Ovary (tissue), 10 donors: ENCODE measurements at regions of chr1 and their contacts with region 1.

Region 1: GRCh38 chr1:31548907-31549808 is 27.2 kb upstream of the TINAGL1 start:
- DNase-seq: peak; percentile 67 to 88 (median 84)
- H3K4me3 ChIP-seq: no peak overlapping the region
- H3K27ac ChIP-seq: no peak overlapping the region
- H3K4me1 ChIP-seq: peaks cover 5% of the 10 kb centered on the region
- H3K27me3 ChIP-seq: no peaks in the 10 kb centered on the region
- CTCF ChIP-seq: peak; percentile 83 to 88 (median 84)
- EP300 ChIP-seq: no peak
- POLR2A ChIP-seq: no peak

Region 2: DNA sequence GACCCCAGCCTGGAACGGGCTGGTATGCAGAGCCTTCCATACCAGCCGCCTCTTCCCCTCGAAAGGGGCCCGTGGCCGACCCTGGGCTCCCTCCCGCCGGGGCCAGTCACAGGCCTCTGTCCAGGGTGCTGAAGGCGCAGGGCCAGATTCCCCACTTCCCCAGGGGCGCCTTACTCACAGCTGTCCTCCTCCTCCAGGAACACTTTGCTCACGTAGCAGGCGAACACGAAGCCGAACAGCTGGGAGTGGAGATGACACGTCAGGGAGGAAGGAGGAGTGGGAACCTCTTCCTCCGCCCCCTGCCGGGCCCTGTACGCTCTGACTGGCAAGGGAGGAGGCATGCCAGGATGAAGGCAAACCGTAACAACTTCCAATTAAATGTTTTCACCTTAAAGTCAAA is 366.8 kb before region 1 on chr1:
- intact Hi-C with region 1: loop called in 1 of 4 experiments (anchors 10 kb)
- DNase-seq: peak; percentile 60 to 93 (median 77)
- H3K4me3 ChIP-seq: no peak overlapping the region
- H3K27ac ChIP-seq: no peak overlapping the region
- H3K4me1 ChIP-seq: no peaks in the 10 kb centered on the region
- H3K27me3 ChIP-seq: no peaks in the 10 kb centered on the region
- CTCF ChIP-seq: no peak
- EP300 ChIP-seq: no peak
- POLR2A ChIP-seq: no peak

Region 3: DNA sequence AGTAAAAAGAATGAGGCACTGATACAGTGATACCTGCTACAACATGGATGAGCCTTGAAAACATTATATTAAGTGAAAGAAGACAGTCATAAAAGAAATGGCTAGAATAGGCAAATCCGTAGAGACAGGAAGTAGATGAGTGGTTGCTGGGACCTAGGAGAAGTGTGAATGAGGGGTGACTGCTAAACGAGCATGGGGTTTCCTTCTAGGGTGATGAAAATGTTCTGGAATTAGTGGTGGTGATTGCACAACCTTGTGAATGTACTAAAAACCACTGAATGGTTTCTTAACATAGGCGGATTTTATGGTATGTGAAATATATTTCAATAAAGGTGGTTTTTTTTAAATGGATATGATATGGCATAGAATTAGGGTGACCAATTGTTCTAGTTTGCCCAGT is 148.8 kb before region 1 on chr1:
- intact Hi-C with region 1: loop called in 1 of 4 experiments (anchors 10 kb)
- DNase-seq: no peak
- H3K4me3 ChIP-seq: no peak overlapping the region
- H3K27ac ChIP-seq: no peak overlapping the region
- H3K4me1 ChIP-seq: no peaks in the 10 kb centered on the region
- H3K27me3 ChIP-seq: no peaks in the 10 kb centered on the region
- CTCF ChIP-seq: no peak
- EP300 ChIP-seq: no peak
- POLR2A ChIP-seq: no peak

Region 4: GRCh38 chr1:31422505-31423319 is 126.4 kb before region 1 on chr1:
- intact Hi-C with region 1: loop called in 1 of 4 experiments (anchors 5 kb)
- DNase-seq: peak; percentile 59 to 80 (median 72)
- H3K4me3 ChIP-seq: no peak overlapping the region
- H3K27ac ChIP-seq: no peak overlapping the region
- H3K4me1 ChIP-seq: no peaks in the 10 kb centered on the region
- H3K27me3 ChIP-seq: no peaks in the 10 kb centered on the region
- CTCF ChIP-seq: peak; percentile 80 to 89 (median 82)
- EP300 ChIP-seq: no peak
- POLR2A ChIP-seq: no peak